PC-9 (cell line): ENCODE measurements at regions of chr19 and their contacts with region 1.

Region 1: DNA sequence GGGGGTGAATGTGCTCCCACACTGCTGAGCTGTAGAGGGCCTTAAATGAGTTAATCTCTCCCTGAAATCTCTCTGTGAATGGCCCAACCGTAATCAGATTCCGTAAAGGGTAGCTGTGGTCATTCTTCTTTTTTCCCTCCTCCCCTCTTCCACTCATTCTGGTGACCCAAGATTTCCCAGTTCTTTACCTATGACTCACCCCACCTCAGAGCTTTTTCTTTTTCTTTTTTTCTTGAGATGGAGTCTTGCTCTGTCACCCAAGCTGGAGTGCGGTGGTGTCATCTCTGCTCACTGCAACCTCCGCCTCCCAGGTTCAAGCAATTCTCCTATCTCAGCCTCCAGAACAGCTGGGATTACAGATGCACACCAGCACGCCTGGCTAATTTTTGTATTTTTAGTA is 33.3 kb upstream of the MUC16 start:
- DNase-seq: peak; percentile 49 to 91
- H3K4me3 ChIP-seq: no peak overlapping the region
- H3K27ac ChIP-seq: no peak overlapping the region
- H3K4me1 ChIP-seq: peaks cover 65% of the 10 kb centered on the region
- H3K27me3 ChIP-seq: no peaks in the 10 kb centered on the region
- CTCF ChIP-seq: no peak

Region 2: GRCh38 chr19:8973501-8974091 is 69.9 kb before region 1 on chr19:
- CTCF ChIA-PET with region 1: no interaction called
- POLR2A ChIA-PET with region 1: interaction called, 14 read pairs
- intact Hi-C with region 1: no loop called
- DNase-seq: peak in 1 of 2 experiments; percentile 31
- H3K4me3 ChIP-seq: no peak overlapping the region
- H3K27ac ChIP-seq: no peak overlapping the region
- H3K4me1 ChIP-seq: no peaks in the 10 kb centered on the region
- H3K27me3 ChIP-seq: no peaks in the 10 kb centered on the region
- CTCF ChIP-seq: no peak

Region 3: DNA sequence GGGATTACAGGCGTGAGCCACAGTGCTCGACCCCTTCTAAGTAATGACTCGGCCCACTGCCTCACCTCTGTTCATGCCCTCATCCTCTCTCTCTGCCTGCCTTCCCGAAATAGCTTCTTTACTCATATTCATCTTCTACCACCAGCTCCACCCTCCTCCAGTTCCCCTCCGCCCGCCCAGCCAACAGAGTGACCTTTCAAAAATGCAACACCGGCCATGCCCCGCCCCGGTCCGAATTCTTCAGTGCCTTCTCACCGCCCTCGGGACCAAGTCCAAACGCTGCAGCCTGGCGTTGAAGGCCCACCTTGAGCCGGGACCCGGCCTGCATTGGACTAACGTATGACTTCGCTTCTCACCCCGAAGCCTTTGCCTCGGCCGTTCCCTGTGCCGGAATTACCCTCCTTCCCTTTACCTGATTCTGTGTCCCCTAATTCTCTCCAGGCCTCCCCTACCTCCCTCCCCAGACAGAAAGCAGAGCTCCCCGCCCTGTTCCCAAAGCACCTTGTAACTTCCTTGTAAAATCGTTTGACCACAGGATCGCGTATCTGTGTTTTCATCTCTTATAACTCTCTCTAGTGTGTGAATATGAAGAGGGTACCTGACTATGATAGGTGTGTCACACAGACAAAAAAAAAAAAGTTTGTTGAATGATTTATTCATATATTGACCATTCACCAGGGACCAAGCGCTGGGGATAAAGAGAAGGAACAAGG is 25.2 kb before region 1 on chr19:
- CTCF ChIA-PET with region 1: interaction called, 14 read pairs
- POLR2A ChIA-PET with region 1: interaction called, 5 read pairs
- intact Hi-C with region 1: no loop called
- DNase-seq: peak; percentile 94 to 98
- H3K4me3 ChIP-seq: peak overlapping the region; percentile 44; the same call in 1 of the 2 replicates
- H3K27ac ChIP-seq: peak overlapping the region; percentile 95
- H3K4me1 ChIP-seq: peaks cover 13% of the 10 kb centered on the region
- H3K27me3 ChIP-seq: no peaks in the 10 kb centered on the region
- CTCF ChIP-seq: no peak

Region 4: GRCh38 chr19:9054765-9055164 is 11.2 kb after region 1 on chr19:
- CTCF ChIA-PET with region 1: no interaction called
- POLR2A ChIA-PET with region 1: interaction called, 13 read pairs
- intact Hi-C with region 1: loop called (anchors 1 kb)
- DNase-seq: peak; percentile 90 to 98
- H3K4me3 ChIP-seq: peak overlapping the region; percentile 35; the same call in 1 of the 2 replicates
- H3K27ac ChIP-seq: peak overlapping the region; percentile 92
- H3K4me1 ChIP-seq: peaks cover 73% of the 10 kb centered on the region
- H3K27me3 ChIP-seq: no peaks in the 10 kb centered on the region
- CTCF ChIP-seq: no peak

Region 5: DNA sequence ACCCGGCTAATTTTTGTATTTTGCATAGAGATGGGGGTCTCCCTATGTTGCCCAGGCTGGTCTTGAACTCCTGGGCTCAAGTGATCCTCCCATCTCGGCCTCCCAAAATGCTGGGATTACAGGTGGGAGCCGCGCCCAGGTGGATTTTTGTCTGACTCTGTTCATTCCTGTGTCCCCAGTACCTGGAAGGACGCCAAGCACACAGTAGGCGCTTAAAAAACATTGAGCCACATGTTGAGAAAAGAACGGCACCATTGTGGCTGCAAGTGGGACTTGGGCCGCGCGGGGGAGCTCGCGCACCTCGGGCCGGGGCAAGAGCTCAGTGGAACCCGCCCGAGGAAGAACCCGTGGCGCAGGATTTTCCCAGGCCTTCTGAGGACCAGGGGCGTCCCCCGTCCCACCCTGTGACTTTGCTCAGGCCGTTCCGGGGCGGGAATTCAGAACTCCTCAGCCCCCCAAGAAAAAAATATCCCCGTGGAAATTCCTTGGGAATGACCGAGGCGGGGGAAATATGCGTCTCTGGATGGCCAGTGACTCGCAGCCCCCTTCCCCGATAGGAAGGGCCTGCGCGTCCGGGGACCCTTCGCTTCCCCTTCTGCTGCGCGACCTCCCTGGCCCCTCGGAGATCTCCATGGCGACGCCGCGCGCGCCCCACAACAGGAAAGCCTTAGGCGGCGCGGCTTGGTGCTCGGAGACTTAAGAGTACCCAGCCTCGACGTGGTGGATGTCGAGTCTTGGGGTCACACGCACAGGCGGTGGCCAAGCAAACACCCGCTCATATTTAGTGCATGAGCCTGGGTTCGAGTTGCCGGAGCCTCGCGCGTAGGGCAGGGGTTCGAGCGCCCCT is 1226.0 kb after region 1 on chr19:
- CTCF ChIA-PET with region 1: interaction called, 12 read pairs
- POLR2A ChIA-PET with region 1: no interaction called
- intact Hi-C with region 1: no loop called
- DNase-seq: peak; percentile 62 to 83
- H3K4me3 ChIP-seq: peak overlapping the region; percentile 64; the same call in 1 of the 2 replicates
- H3K27ac ChIP-seq: no peak overlapping the region
- H3K4me1 ChIP-seq: peaks cover 25% of the 10 kb centered on the region
- H3K27me3 ChIP-seq: no peaks in the 10 kb centered on the region
- CTCF ChIP-seq: peak; percentile 100